Dendritic cell treated with granulocyte-macrophage colony-stimulating factor and Interleukin-4, amounts not matched to agents 40 ng/mL and 50 ng/mL, for 4 days (primary cell): ENCODE measurements at regions of chr5 and their contacts with region 1.

Region 1: DNA sequence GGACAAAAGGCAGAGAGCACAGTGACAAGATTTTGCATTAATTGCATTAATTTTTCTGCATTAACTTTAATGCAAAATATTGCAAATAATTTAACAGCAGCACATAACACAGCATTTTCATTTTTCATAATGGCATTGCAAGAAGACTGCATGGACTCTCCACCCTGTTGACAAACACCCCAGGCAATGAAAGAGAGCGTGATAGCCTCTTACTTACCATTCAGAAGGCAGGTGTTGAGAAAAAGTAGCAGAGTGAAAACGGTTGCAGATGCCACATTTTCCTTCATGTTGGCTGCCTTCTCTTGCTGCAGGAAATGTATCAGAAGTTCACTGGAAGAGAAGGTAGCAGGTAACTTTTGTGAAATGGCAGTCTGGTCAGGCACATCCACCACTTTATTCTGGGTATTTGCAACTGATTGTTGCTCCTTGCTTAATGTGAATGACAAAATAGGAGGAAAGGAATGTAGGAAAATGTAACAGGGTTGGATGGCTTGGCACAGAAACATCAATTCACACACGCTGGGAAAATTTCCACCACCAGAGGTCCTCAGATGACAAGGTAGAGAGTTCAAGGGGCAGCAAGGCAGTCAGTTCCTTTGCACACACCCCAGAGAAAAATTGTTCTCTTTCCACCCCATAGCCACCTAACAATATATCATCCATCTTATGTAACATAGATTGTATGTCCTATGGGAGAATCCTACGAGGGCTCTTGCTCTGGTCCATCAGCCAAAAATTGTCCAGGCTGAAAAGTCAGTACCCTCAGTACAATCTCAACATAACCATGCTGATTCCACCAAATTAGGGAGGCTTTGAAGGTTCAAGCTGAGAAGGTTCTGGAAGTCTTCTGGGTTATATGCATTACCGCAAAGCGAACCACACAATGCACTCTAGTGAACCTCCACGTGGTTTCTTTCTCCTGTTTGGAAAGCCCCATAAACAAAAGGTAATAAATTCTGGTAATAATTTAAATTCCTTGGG is 41.9 kb upstream of the AGXT2 start:
- H3K4me3 Mint-ChIP-seq: no peak overlapping the region
- H3K27ac Mint-ChIP-seq: no peak overlapping the region
- H3K4me1 Mint-ChIP-seq: no peaks in the 10 kb centered on the region
- H3K27me3 Mint-ChIP-seq: no peaks in the 10 kb centered on the region

Region 2: DNA sequence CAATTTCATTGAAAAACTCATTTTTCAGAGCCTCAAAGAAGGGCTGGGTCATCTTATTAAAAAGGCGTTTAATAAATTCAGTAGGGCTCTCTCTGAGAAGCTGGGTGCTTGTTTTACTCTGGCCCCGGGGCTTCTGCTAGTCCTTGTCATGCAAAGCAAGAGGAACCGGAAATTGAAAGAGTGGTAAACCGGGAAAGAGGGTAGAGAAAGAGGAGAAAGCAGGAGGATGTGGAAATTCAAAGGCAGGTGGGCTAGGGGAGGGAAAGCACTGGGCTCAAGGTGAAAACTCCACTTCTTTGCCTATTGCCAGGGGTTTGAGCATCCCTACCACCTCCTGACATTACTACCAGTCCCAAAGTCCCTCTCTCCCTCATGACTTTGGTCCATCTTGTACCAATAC is 22.7 kb after region 1 on chr5:
- intact Hi-C with region 1: no loop called
- H3K4me3 Mint-ChIP-seq: no peak overlapping the region
- H3K27ac Mint-ChIP-seq: no peak overlapping the region
- H3K4me1 Mint-ChIP-seq: no peaks in the 10 kb centered on the region
- H3K27me3 Mint-ChIP-seq: no peaks in the 10 kb centered on the region

Region 3: DNA sequence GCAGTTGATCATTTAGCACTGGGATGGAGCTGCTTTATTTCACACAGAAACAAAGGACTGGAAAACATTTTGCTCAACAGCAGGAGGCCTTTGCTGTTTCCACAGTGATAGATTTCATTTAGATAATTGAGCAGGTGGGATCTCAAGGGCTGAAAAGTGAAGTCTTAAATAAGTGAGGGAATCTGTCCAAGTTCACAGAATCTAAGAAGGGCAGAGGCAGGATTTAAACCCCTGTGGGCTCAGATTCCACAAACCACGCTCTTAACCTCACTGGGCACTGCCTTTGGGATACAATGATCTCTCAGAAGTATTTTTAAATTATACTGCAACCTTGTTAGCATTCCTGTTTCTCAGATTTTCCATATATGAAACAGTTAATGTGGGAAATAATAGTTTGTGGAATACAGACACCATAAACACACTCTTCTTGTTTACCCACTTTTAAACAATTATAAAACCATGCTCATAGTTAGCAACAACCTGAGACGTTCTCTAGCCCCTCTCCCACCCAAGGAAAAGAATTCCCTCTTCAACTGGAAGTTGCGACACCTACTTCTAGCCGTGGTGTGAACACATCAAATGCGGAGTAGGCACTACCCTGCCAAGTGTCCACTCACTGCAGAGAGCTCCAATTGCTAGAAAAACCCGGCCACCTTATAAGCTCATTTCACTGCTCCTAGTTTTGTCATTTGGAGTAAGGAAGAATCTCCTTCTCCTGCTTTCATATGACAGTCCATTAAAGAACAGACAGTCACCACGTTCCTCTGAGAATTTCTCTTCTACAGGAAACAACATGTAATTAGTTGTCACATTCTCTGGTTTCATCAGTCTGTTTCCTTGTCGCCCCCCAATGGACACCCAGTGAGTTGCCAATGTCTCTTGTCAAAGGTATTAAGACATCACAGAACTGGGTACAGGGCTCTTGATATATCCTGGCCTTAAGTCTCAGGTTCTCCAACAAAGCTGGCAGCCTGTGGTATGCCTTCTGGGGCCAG is 93.2 kb after region 1 on chr5:
- intact Hi-C with region 1: loop called (anchors 1 kb)
- H3K4me3 Mint-ChIP-seq: no peak overlapping the region
- H3K27ac Mint-ChIP-seq: no peak overlapping the region
- H3K4me1 Mint-ChIP-seq: peaks cover 6% of the 10 kb centered on the region
- H3K27me3 Mint-ChIP-seq: no peaks in the 10 kb centered on the region

Region 4: DNA sequence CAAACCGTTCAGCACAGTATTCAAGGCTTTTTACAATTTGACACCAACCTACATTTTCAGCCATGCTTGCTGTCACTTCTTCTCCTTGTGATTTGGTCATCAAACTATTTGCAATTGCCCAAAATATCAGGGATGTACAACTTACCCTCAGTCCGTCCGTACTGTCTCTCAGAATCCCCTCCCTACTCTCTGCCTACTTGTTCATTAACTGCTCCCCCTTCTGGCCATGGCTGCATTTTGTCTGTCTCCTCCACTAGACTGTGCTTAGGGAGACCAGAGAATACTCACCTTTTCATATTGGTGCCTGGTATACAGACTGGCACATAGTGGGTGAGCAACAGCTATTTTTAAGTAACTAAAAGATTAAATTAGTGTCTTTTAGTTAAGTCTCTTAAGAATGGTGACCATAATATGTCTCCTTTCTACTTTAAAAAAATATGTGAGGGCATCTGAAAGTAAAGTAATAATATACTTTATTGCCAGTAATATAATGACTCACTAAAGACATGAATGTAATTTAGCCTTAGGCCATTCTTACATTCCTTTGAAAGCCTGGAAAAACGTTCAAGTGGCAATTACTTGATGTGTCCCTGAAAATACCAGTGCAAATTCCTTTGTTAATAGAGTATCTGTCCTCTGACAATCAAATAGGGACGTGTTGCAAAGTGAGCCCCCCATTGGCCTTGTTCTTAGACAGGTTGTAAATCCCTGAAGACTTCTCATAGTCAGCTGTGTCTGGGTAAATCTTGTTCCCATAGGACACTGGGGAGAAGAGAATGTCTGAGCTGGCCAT is 112.9 kb after region 1 on chr5:
- intact Hi-C with region 1: loop called (anchors 1 kb)
- H3K4me3 Mint-ChIP-seq: no peak overlapping the region
- H3K27ac Mint-ChIP-seq: no peak overlapping the region
- H3K4me1 Mint-ChIP-seq: peaks cover 17% of the 10 kb centered on the region
- H3K27me3 Mint-ChIP-seq: no peaks in the 10 kb centered on the region

Region 5: DNA sequence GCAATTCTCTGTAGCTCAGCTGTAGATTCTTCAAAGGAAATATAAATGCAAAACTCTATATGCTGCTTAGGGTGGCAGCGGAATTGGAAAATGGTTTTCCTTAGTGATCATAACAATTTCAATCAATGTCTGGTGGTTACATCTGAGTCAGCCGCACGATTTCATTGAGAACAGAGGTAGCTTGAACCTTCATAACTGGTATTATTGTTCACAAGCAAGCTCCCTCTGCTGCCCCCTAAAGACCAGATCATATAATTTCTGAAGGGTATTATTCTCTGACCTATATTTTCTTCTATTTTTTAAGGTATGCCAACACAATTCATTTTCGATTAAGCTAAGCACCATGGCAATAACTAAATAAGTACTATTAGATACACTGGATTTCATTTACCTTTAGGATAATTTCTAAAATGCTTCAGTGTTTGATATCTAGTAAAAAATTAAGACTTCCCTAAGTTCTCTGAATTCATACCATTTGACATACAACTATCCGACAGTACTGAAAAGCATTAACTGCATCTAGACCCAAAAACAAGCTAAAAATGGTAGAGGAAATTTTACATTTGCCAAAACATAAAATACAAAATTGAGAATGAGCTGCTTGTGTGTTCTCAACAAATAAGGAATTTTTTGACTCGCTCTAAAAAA is 346.9 kb after region 1 on chr5:
- intact Hi-C with region 1: loop called (anchors 5 kb)
- H3K4me3 Mint-ChIP-seq: no peak overlapping the region
- H3K27ac Mint-ChIP-seq: no peak overlapping the region
- H3K4me1 Mint-ChIP-seq: peaks cover 22% of the 10 kb centered on the region
- H3K27me3 Mint-ChIP-seq: no peaks in the 10 kb centered on the region

Region 6: GRCh38 chr5:35598707-35599370 is 509.2 kb after region 1 on chr5:
- intact Hi-C with region 1: loop called (anchors 1 kb)
- H3K4me3 Mint-ChIP-seq: no peak overlapping the region
- H3K27ac Mint-ChIP-seq: no peak overlapping the region
- H3K4me1 Mint-ChIP-seq: no peaks in the 10 kb centered on the region
- H3K27me3 Mint-ChIP-seq: no peaks in the 10 kb centered on the region

Region 7: GRCh38 chr5:35777358-35778087 is 687.9 kb after region 1 on chr5:
- intact Hi-C with region 1: loop called (anchors 5 kb)
- H3K4me3 Mint-ChIP-seq: no peak overlapping the region
- H3K27ac Mint-ChIP-seq: no peak overlapping the region
- H3K4me1 Mint-ChIP-seq: peaks cover 6% of the 10 kb centered on the region
- H3K27me3 Mint-ChIP-seq: no peaks in the 10 kb centered on the region

Region 8: DNA sequence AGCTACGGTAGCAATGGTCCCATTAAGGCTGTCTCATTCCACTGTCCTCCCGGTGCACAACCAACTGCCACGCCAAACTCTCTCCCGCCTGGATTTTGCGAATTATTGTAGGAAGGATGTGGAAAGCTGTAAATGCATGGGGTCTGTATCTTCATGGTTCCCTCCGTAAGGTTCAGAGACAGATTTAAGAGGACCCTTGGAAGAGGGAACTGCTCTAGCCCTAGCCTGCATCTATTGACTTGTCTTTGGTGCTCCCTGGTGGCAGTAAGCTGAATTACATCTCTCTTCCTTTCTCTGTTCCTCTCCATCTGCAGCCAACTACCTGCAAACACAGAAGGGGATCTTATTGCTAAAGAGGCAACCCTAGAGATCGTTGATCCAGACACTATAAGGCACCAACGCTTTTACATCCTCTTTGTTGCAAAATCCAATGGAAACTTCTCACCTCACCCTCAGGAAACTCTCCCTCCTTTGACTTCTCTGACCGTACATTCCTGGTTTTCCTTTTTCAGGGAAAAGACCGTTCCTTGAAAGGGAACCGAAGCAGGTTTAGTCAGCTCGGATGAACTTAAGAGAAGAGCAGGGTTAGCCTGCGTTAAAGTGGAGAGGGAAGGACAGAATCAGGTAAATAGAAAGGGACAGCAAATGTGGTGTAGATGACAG is 836.9 kb after region 1 on chr5:
- intact Hi-C with region 1: loop called (anchors 2 kb)
- H3K4me3 Mint-ChIP-seq: no peak overlapping the region
- H3K27ac Mint-ChIP-seq: no peak overlapping the region
- H3K4me1 Mint-ChIP-seq: peaks cover 28% of the 10 kb centered on the region
- H3K27me3 Mint-ChIP-seq: peaks cover 30% of the 10 kb centered on the region